RWPE1 (cell line): ENCODE measurements at regions of chrX and their contacts with region 1.

Region 1: DNA sequence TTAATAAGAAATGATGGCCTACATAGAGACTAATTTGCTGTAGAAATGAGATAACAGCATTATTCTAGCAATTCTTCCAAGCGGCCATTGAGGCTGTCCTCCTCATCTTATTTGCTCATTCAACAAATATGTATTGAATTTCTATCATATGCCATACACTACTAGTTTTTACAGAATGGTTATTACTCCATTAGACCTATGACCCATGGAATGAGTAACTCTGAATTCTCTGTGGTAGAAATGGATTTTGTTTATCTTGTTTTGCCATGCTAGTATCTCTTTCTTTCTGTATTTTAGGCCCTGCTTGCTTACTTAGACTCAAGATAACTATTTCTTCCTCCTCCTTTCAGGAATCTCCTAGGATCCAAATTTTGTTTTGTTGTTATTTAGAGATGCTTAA is 103.5 kb downstream of the RPA4 start:
- DNase-seq: no peak
- H3K27ac ChIP-seq: no peak overlapping the region
- CTCF ChIP-seq: no peak

Region 2: GRCh38 chrX:96833333-96833732 is 153.9 kb before region 1 on chrX:
- CTCF ChIA-PET with region 1: interaction called, 12 read pairs
- POLR2A ChIA-PET with region 1: no interaction called
- DNase-seq: no peak
- H3K27ac ChIP-seq: no peak overlapping the region
- CTCF ChIP-seq: no peak

Region 3: GRCh38 chrX:97074400-97074799 is 87.2 kb after region 1 on chrX:
- CTCF ChIA-PET with region 1: no interaction called
- POLR2A ChIA-PET with region 1: no interaction called
- DNase-seq: no peak
- H3K27ac ChIP-seq: no peak overlapping the region
- CTCF ChIP-seq: no peak